Sciatic nerve (tissue), 2 donors: ENCODE measurements at regions of chr12 and their contacts with region 1.

Region 1: DNA sequence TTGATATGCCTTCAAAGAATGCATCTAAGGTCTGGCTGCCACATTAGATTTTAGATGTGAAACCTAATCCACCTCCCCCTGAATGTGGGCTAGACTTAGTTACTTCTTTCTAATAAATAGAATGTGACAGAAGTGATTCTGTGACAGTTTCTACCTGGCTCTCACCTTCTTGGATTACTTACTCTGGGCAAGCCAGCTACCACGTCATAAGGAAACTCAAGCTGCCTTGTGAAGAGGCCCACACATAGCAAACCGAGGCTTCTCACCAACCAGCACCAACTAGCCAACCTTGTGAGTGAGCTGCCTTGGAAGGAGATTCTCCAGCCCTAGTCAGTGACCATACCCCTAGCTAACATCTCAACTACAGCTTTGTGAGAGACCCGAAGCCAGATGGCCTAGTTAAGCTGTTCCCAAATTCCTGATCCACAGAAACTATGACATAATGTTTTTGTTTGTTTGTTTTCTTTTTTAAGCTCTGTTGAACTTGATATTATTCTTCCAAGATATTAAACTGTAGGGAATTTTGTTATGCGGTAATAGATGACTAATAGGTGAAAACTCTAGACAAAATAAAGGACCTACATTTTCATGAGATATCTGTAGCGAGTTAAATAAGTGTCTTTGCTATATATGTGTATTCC is 6.2 kb downstream of the GPR19 start:
- DNase-seq: no peak
- ATAC-seq: no peak

Region 2: GRCh38 chr12:12568045-12568444 is 121.7 kb before region 1 on chr12:
- intact Hi-C with region 1: loop called (anchors 1 kb)
- DNase-seq: no peak
- ATAC-seq: no peak